ENCODE measurements at regions of chr14 and their contacts with region 1.

Region 1: DNA sequence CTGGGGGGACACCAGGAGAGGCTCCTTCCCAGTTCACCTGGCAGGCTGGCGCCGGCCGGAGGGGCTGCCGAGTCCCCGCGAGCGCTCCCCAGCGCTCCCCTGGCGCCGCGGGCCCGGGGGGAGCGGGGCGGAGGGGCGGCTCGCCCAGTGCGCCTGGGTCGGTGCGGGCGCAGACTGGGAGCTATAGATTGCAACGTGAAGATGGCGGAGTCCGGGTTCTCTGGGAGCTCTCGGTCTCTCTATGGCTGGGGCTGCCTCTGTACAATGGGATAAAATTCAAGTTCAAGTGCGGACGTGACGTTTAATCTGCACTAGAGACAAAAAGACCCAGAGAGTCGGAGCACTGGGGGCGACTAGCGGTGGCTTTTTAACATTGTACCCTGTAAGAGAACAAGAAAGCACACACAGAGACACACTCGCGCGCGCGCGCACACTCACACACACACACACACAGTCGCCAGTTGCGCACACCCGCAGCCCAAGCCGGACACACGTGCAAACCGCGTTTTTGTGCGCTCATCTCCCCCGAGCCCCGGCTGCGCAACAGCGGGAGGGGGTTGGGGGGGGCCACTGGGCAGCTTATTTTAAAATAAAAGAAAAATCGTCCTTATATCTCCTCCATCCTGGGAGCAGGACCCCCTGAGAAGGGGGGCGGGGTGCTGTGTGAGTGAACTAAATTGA is at the start of gene BCL11B:
- DNase-seq: peak; percentile 84
- H3K4me3 Mint-ChIP-seq: peak within 1 kb of the TSS; percentile 93
- H3K27ac Mint-ChIP-seq: peak within 1 kb of the TSS; percentile 93
- H3K4me1 Mint-ChIP-seq: peaks cover 38% of the 10 kb centered on the region
- H3K27me3 Mint-ChIP-seq: peaks cover 8% of the 10 kb centered on the region
- total RNA-seq, gene BCL11B: 43.5 and 45.4 TPM in 2 replicates

Region 2: GRCh38 chr14:97306760-97307246 is 1965.3 kb before region 1 on chr14:
- intact Hi-C with region 1: loop called (anchors 2 kb)
- DNase-seq: no peak
- H3K4me3 Mint-ChIP-seq: peak overlapping the region; percentile 9
- H3K27ac Mint-ChIP-seq: peak overlapping the region; percentile 81
- H3K4me1 Mint-ChIP-seq: peaks cover 28% of the 10 kb centered on the region
- H3K27me3 Mint-ChIP-seq: no peaks in the 10 kb centered on the region

Region 3: DNA sequence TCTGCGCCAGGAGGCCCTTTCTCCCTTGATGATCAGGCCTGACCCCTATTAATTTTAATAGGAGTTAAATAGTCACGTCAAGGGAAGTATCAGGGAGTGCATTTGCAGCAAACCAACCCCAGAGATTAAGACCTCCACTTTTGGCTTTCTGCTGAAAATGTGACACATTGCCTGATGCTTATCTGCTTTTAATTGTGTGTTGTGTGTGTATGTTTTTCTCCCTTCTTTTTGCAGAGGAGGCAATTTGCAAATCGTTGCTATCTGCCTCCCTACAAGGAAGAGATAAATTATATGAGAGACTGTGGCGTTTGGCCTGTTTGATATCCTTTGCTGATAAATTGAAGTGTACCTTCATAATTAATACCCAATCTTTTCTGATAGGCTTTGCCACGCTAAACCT is 1652.0 kb before region 1 on chr14:
- intact Hi-C with region 1: loop called (anchors 5 kb)
- DNase-seq: no peak
- H3K4me3 Mint-ChIP-seq: peak overlapping the region; percentile 79
- H3K27ac Mint-ChIP-seq: peak overlapping the region; percentile 56
- H3K4me1 Mint-ChIP-seq: peaks cover 47% of the 10 kb centered on the region
- H3K27me3 Mint-ChIP-seq: peaks cover 4% of the 10 kb centered on the region

Region 4: DNA sequence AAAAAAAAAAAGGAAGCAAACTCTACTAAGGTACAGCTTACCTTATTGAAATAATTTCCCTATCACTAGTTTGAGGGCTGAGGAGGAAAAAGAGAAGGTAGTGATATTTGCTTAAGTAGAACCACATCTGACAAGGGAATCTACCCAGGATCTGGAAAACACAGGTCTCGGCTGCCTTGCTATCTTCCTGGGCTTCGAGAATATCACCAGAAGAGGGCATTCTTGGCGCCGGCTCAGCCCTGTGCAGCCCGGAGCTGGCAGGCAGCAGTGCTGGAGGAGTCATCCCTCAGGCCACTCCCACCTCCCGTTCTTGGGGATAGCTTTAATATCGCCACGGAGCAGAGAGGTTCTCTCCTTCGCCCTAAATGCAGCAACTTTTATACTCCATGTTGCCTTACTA is 1293.8 kb before region 1 on chr14:
- intact Hi-C with region 1: loop called (anchors 1 kb)
- DNase-seq: peak; percentile 70
- H3K4me3 Mint-ChIP-seq: peak overlapping the region; percentile 84
- H3K27ac Mint-ChIP-seq: peak overlapping the region; percentile 87
- H3K4me1 Mint-ChIP-seq: peaks cover 62% of the 10 kb centered on the region
- H3K27me3 Mint-ChIP-seq: no peaks in the 10 kb centered on the region

Region 5: GRCh38 chr14:98512501-98513251 is 759.4 kb before region 1 on chr14:
- intact Hi-C with region 1: loop called (anchors 5 kb)
- DNase-seq: no peak
- H3K4me3 Mint-ChIP-seq: no peak overlapping the region
- H3K27ac Mint-ChIP-seq: peak overlapping the region; percentile 12
- H3K4me1 Mint-ChIP-seq: peaks cover 36% of the 10 kb centered on the region
- H3K27me3 Mint-ChIP-seq: no peaks in the 10 kb centered on the region

Region 6: DNA sequence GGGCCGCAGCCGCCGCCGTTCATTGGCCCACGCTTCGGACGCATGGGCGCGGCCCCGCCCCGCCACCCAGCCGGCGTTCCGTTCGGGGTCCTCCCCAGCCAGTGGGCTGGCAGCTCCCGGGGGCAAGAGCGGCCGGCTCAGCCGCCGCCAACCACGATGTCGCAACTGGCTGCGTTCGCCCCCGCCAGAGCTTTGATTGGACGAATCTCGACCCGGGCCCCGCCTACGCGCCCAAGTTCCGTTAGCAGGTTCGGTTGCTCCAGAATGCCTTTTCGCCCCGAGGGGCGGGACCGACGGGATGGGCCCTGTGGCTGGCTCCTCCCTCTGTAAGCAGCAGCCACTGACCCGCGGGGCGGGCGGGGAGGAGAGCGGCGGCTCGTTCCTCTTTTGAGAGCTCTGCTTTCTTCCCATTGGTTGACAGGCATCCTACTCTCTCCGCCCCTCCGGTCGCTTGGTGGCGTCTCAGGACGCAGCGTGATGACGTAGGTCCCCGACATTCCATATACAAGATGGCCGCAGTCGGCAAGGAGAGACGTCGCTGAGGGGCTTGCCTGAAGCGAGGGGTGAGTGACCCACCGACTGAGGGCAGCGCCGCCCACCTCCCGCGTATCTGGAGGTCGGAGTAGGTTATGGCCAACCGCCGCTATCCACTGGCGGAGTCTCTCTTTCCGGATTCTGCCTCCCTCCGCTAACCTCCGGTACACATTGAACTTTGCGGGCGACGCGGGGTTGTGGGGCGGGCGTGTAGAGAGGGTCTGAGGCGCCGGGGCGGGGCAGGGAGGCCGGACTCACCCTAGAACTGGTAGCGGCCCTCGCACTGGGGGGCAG is 209.0 kb after region 1 on chr14 and contains the start of gene CCNK:
- intact Hi-C with region 1: loop called (anchors 2 kb)
- DNase-seq: peak; percentile 100
- H3K4me3 Mint-ChIP-seq: peak within 1 kb of the TSS; percentile 98
- H3K27ac Mint-ChIP-seq: peak within 1 kb of the TSS; percentile 98
- H3K4me1 Mint-ChIP-seq: peaks cover 49% of the 10 kb centered on the region
- H3K27me3 Mint-ChIP-seq: no peaks in the 10 kb centered on the region
- total RNA-seq, gene CCNK: 80.8 and 87.1 TPM in 2 replicates